Left cardiac atrium (tissue), 4 donors: ENCODE measurements at regions of chr10 and their contacts with region 1.

Region 1: DNA sequence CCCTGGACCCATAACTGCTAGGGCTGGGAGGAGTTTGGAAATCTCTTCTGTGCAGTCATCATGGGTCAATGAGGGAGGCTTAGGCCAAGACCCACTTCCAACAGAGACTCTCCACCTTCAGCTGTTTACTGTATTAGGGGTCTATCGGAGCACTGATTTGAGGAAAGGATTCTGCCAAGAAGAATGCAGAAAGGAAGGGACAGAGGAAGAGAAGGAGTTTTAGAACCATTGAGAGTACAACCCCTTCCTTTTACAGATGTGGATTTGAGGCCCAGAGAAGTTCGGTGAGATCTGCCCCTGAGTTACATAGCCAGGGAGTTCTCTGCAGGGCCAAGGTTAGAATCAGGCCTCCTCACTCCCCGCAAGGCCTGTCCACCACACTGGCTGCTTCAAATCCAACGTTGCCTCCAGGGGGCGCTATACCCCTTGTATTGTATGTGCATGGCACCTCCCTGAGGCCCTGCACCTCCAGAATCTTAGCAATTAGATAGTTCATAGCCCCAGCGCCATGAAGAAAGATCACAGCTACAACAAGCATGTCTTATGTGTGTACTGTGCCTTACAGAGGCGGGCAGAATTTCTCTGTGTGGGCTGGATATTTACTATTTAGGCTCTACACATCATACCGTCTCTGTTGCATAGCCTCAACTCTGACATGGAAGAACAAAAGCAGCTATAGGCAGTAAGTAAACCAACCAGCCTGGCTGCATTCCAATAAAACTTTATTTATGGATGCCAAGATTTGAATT is 246.8 kb downstream of the SKIDA1 start:
- DNase-seq: peak; percentile 97
- ATAC-seq: peak; percentile 97 to 99

Region 2: GRCh38 chr10:21732067-21732772 is 453.6 kb after region 1 on chr10:
- intact Hi-C with region 1: loop called in 1 of 2 experiments (anchors 10 kb)
- DNase-seq: peak; percentile 74
- ATAC-seq: peak; percentile 93 to 94

Region 3: DNA sequence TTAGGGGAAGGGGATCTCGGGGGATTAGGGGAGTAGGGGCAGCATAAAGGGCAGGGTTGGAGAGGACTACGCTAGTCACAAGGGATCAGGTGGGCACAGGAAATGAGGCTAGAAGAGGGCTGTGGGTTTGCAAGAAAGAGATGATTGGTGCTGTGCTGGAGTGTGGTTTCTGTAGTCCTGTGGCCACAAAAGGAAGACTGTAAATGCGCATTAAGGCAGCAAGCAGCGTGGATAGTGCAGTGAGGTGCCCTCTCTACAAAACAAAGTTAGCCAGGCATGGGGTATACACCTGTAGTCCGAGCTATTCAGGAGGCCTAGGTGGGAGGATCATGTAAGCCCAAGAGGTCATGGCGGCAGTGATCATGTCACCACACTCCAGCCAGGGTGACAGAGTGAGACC is 467.5 kb after region 1 on chr10:
- intact Hi-C with region 1: loop called in 1 of 2 experiments (anchors 10 kb)
- DNase-seq: no peak
- ATAC-seq: no peak

Region 4: GRCh38 chr10:22427890-22428571 is 1149.4 kb after region 1 on chr10:
- intact Hi-C with region 1: loop called in 1 of 2 experiments (anchors 10 kb)
- DNase-seq: no peak
- ATAC-seq: peak; percentile 68 to 89